Cardiac septum (tissue), 1 donor: ENCODE measurements at regions of chr4 and their contacts with region 1.

Region 1: DNA sequence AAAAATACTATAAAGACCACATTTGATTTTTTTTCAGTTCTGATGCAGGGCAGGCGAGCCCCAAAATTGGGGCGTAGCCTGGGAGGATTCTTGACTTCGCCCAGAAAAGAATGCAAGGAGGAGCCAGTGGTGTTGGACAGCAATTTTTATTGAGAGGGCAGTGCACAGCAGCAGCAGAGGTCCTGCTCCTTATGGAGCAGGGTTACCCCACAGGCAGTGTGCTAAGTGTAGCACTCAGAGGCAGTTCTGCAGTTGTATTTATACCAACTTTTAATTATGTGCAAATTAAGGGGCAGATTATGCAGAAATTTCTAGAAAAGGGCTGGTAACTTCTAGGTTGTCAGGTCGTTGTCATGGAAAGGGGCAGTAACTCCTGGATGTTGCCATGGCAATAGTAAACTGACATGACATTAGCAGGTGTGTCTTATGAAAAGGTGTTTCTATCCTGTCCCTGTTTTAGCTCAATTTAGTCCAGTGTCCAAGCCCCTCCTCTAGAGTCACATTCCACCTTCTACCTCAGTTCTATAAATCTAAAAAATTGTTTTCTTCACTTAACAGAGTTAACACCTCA is 69.8 kb downstream of the GASK1B start:
- DNase-seq: no peak

Region 2: DNA sequence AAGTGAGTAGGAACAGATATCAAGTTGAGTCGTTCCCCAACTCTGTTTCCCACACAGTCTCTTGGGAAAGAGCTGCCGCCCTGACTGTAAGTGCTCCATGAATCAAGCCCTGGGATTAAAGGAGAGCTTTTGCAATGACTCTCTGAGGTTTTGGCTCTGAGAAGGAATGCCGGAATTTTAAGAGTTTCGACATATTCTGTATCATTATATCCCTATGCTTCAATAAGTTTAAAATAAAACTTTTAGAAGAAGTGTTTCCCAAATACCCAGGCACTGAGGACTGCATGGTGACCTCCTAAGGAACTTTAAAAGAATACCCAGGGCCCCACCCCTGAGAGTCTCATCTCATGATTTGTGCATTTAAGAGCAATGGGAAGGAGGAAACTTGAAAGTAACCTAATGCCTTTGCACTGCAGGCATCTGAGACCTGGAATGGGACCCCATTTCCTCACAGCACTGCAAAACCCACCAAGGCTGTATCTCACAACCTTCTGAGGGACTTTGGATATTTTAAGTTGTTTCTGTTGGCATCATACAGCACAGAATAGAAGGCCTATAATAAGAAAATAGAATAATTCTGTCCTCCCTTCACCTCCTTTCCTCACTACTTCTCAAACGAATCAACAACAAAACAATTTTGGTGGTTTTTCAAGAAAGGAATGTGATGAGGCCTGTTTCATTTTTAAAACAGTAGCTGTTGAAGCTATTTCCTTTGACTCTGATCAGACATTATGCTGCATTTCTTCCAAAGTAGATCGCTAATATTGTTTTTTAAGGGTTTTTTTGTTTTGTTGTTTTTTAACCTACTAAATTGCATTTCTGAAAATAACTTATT is 51.4 kb before region 1 on chr4:
- intact Hi-C with region 1: loop called (anchors 10 kb)
- DNase-seq: no peak